Mucosa of descending colon (tissue), 3 donors: ENCODE measurements at regions of chr4 and their contacts with region 1.

Region 1: DNA sequence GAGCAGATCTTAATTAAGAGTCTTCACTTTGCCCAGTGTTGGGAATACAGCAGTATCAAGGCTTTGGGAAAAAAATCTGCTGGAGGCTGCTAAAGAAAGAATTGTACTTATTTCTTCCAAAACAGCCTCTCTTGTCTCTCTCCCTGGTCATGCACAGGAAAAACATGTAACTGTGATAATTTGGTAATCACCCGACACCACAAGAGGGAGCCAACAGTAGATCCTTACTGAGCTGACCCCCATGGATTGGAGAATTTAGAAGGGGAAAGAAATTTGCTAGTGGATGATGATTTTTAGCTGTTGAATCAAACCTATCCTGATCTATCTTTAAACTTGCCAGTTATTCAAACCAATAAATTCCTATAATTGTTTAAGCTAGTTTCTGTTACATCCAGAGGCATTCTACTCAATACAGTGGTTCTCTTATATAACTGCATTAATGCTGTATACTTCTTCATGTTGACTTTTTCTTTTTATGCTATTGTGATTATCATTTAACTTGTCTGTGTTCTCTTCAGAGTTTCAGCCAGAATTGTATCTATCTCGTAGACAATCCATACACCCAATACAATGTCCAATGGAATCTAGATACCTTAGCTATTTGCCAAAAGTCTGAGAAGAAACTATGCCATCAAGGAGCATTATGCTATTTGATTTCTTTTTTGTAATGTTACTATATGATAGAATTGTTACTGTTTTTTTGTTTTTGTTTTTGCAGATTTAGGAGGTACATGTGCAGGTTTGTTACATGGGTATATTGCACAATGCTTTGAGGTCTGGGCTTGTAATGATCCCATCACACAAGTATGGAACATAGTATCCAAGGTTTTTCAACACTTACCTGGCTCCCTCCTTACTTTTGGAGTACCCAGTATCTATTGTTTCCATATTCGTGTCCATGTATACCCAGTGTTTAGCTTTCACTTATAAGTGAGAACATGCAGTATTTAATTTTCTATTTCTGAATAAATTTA is 31.3 kb upstream of the ARHGEF38 start:
- DNase-seq: peak in 1 of 3 donors; percentile 87
- ATAC-seq: peak; percentile 75
- H3K4me3 ChIP-seq: no peak overlapping the region
- H3K4me1 ChIP-seq: no peaks in the 10 kb centered on the region
- CTCF ChIP-seq: peak; percentile 32

Region 2: GRCh38 chr4:105631818-105632400 is 110.8 kb after region 1 on chr4:
- intact Hi-C with region 1: loop called in 1 of 2 experiments (anchors 5 kb)
- DNase-seq: no peak
- ATAC-seq: no peak
- H3K4me3 ChIP-seq: no peak overlapping the region
- H3K4me1 ChIP-seq: peaks cover 10% of the 10 kb centered on the region
- CTCF ChIP-seq: peak; percentile 18